ENCODE measurements at regions of chr16 and their contacts with region 1.

Region 1: DNA sequence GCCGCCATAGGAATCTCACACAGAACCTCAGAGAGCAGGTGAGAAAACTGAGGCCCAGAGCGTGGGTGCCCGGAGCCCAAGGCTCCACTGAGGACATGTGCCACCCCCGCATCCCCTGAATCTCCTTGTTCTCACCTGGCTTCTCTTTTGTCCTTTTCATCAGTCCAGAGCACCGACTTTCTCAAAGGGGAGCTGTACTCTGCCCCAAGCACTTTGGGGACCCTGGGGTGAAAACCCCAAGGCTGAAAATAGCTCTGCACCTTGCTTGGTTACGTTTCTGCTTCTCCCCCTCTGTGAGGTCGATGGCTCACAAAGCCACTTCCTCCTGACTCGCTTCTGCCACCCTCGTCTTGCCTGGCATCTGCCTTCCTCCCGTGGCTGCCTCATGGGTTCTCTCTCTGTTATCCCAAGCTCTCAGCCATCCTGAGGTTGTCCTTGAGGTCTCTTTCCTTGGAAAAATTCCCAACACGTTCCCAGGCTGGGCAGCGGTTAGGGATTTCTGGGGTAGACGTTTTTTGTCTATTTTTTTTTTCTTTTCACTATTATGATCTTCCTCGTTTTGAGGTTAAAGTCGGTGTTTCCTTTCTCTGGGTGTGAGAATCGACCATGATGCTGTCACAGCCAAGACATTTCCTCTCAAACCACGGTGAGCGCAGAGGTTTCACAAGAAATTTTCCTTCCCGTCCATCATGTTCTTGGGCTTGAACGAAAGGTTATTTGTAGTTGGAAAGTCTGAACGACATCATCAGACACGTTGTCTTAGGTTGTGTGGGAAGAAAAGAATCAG is 37.2 kb downstream of the IRF8 start:
- DNase-seq: peak; percentile 89
- ATAC-seq: peak; percentile 93
- H3K4me3 ChIP-seq: peak overlapping the region; percentile 36; the same call in 1 of the 2 replicates
- H3K27ac ChIP-seq: peak overlapping the region; percentile 97
- H3K4me1 ChIP-seq: peaks cover 54% of the 10 kb centered on the region
- H3K27me3 ChIP-seq: no peaks in the 10 kb centered on the region
- CTCF ChIP-seq: peak in 2 of 3 experiments; percentile 5 to 6; a peak in 2 of 6 replicates
- EP300 ChIP-seq: peak; percentile 74 to 82; a peak in 2 of 4 replicates
- POLR2A ChIP-seq: 0 out of 2 replicates have a peak, but pooled peaks have one; percentile 19
- RAD21 ChIP-seq: peak; percentile 26; the same call in 1 of the 2 replicates

Region 2: GRCh38 chr16:85898521-85899442 is 37.4 kb before region 1 on chr16 and contains the start of gene IRF8:
- CTCF ChIA-PET with region 1: interaction called, 14 read pairs
- POLR2A ChIA-PET with region 1: interaction called, 9 read pairs
- RAD21 ChIA-PET with region 1: interaction called, 27 read pairs
- SMC1A ChIA-PET with region 1: interaction called, 24 read pairs
- in situ Hi-C with region 1: no loop called
- intact Hi-C with region 1: loop called (anchors 1 kb)
- DNase-seq: peak; percentile 59
- ATAC-seq: peak; percentile 77
- H3K4me3 ChIP-seq: peak within 1 kb of the TSS; percentile 99
- H3K27ac ChIP-seq: peak within 1 kb of the TSS; percentile 89
- H3K4me1 ChIP-seq: peaks cover 7% of the 10 kb centered on the region
- H3K27me3 ChIP-seq: no peaks in the 10 kb centered on the region
- CTCF ChIP-seq: no peak
- EP300 ChIP-seq: no peak
- POLR2A ChIP-seq: peak; percentile 100
- RAD21 ChIP-seq: no peak
- polyA plus RNA-seq, gene IRF8: 17.1 to 34.5 TPM

Region 3: DNA sequence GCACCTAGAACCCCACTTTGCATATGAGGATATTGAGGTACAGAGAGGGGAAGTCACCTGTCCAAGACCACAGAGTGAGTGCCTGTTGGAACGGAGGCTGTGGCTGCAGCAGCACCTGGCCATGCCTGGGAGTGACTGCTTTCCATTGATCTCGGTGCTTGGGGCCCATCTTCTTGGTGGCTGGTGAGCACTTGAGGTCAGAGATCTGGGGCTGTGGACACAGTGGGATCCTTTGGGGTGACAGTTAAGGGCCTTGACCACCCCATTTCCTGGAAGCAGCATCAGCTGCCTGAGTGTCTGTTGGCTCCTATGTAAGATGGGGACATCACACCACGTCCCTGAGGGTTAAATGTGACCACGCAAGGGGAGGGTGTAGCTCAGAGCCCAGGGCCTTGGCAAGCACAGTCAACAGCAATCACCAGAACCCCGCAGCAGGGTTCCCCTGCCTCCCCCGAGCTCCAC is 74.5 kb after region 1 on chr16:
- CTCF ChIA-PET with region 1: interaction called, 5 read pairs
- POLR2A ChIA-PET with region 1: interaction called, 4 read pairs
- RAD21 ChIA-PET with region 1: interaction called, 7 read pairs
- SMC1A ChIA-PET with region 1: interaction called, 4 read pairs
- in situ Hi-C with region 1: no loop called
- intact Hi-C with region 1: loop called (anchors 2 kb)
- DNase-seq: no peak
- ATAC-seq: peak; percentile 71
- H3K4me3 ChIP-seq: no peak overlapping the region
- H3K27ac ChIP-seq: peak overlapping the region; percentile 66
- H3K4me1 ChIP-seq: peaks cover 47% of the 10 kb centered on the region
- H3K27me3 ChIP-seq: no peaks in the 10 kb centered on the region
- CTCF ChIP-seq: no peak
- EP300 ChIP-seq: peak in 1 of 2 experiments; percentile 54; a peak in 2 of 4 replicates
- POLR2A ChIP-seq: no peak
- RAD21 ChIP-seq: no peak